ENCODE measurements at regions of chr5 and their contacts with region 1.

Region 1: GRCh38 chr5:74640450-74640953 is at the start of gene ENC1:
- DNase-seq: no peak
- H3K4me3 ChIP-seq: peak within 1 kb of the TSS; percentile 82
- H3K27me3 ChIP-seq: no peaks in the 10 kb centered on the region
- CTCF ChIP-seq: peak; percentile 38
- polyA plus RNA-seq, gene ENC1: 26.5 and 34.1 TPM in 2 replicates

Region 2: GRCh38 chr5:73902327-73903051 is 738.0 kb before region 1 on chr5:
- CTCF ChIA-PET with region 1: interaction called, 33 read pairs
- POLR2A ChIA-PET with region 1: no interaction called
- DNase-seq: no peak
- H3K4me3 ChIP-seq: no peak overlapping the region
- H3K27me3 ChIP-seq: no peaks in the 10 kb centered on the region
- CTCF ChIP-seq: peak; percentile 58

Region 3: GRCh38 chr5:73911761-73912393 is 728.6 kb before region 1 on chr5:
- CTCF ChIA-PET with region 1: interaction called, 17 read pairs
- POLR2A ChIA-PET with region 1: no interaction called
- DNase-seq: no peak
- H3K4me3 ChIP-seq: no peak overlapping the region
- H3K27me3 ChIP-seq: no peaks in the 10 kb centered on the region
- CTCF ChIP-seq: no peak

Region 4: DNA sequence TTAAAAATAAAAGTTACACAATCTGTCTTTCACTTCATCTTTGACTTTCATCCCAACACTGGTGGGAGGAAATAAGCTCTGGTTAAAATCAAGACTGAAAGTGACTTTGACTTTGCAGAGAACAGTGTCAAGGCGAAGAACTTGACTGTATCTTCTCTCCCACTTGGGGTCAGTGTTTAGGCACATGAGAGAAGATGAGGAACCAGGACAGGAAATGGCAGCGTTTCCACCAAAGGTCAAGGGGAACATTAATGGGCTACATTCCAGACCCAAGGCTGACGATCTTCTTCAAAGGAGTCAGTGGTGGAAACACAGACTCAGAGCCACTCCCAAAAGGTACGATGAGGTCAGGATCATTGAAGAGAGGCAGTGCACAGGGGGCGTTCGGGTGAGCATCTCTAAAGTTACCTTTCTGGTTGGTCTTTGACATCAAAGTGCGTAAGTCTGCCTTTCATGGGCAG is 605.0 kb before region 1 on chr5:
- CTCF ChIA-PET with region 1: interaction called, 33 read pairs
- POLR2A ChIA-PET with region 1: no interaction called
- DNase-seq: no peak
- H3K4me3 ChIP-seq: no peak overlapping the region
- H3K27me3 ChIP-seq: no peaks in the 10 kb centered on the region
- CTCF ChIP-seq: peak; percentile 51

Region 5: DNA sequence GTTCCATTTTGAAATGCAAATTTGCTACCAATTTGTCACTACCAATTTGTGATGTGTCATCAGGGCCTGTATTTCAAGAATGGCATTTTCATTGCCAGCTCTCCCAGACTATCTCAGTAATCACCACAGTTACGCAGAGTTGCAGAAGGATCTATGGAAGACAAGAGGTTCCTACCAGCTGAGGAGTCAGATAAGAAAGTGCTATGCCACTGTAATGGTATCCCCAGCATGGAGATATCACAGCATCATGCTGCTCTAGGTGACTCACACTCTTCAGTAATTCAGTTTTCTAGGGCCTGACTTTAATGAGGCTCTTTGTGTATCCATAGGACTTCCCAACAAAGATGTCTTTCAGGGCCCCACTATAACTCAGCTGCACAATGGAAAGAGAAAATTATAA is 524.2 kb before region 1 on chr5:
- CTCF ChIA-PET with region 1: no interaction called
- POLR2A ChIA-PET with region 1: no interaction called
- DNase-seq: no peak
- H3K4me3 ChIP-seq: no peak overlapping the region
- H3K27me3 ChIP-seq: no peaks in the 10 kb centered on the region
- CTCF ChIP-seq: no peak

Region 6: GRCh38 chr5:74500110-74500917 is 140.2 kb before region 1 on chr5:
- CTCF ChIA-PET with region 1: no interaction called
- POLR2A ChIA-PET with region 1: interaction called, 18 read pairs
- DNase-seq: no peak
- H3K4me3 ChIP-seq: no peak overlapping the region
- H3K27me3 ChIP-seq: no peaks in the 10 kb centered on the region
- CTCF ChIP-seq: no peak

Region 7: DNA sequence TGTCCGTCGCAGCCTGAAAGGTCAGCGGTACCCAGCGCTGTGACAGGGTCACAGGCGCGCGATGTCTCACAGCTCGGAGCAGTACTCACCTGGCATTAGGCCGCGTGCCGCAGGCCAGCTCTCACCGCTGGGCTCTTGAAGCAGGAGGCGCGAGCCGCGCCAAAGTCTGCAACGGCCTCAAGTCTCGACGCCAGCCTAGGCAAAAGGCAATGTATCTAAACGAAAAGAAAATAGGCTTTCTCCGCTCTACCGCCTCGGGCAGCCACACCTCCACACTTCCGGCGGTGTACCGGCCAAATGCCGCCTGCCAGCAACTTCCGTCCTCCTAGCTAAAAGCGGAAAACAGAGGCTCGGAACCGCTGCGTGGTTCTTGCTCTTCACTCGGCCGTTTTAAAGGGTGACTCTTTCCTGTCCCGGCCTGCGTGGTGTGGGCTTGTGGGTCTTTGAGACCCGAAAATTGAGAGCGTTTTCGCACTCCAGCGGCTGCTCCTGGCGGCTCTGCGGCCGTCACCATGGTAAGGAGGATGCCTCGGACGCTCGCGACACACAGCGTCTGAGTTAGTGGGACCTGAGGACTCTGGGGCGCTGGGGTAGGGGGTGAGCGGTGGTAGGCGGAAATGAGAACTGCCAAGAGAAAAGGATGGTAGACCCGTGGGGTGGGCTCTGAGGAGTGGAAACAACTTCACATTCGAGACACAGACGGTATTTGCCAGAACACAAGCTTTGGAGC is 126.5 kb after region 1 on chr5 and contains the starts of genes GFM2 and NSA2:
- CTCF ChIA-PET with region 1: no interaction called
- POLR2A ChIA-PET with region 1: no interaction called
- DNase-seq: peak; percentile 69
- H3K4me3 ChIP-seq: peak within 1 kb of the TSS; percentile 95
- H3K27me3 ChIP-seq: no peaks in the 10 kb centered on the region
- CTCF ChIP-seq: no peak
- polyA plus RNA-seq, gene GFM2: 19.3 and 35.6 TPM in 2 replicates
- polyA plus RNA-seq, gene NSA2: 11.7 and 66.8 TPM in 2 replicates